Activated CD8-positive, alpha-beta T cell treated with anti-CD3 and anti-CD28 coated beads for 36 hours (primary cell): ENCODE measurements at regions of chr19 and their contacts with region 1.

Region 1: DNA sequence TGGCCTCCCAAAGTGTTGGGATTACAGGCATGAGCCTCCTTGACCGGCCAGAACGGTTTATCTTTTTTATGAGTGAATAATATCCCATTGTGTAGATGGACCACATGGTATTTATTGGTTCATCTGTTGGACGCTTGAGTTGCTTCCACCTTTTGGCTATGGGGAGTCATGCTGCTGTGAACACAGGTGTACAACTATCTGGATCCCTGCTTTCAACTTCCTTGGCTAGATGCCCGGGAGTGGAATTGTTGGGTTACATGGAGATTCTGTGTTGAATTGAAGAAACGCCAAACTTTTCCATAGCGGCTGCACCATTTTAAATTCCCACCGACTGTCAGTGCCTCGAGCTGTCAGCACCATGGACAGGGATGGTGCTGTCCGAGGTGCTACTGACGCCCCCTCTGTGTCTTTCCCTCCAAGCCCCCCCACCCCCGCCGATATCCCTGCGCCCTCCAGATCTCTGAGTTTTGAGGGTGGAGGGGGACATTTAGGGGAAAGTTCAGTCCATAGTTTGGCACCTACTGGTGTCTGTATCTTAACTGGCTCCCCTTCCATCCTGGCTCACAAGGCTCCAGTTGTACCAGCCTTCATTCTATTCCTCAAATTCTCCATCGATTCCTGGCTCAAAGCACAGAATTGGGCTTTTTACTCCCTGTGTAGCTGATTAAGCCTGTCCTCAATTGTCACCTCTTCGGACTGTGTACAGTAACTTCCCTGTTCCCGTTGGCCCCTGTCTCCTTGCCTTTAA is 27.3 kb downstream of the PNPLA6 start:
- DNase-seq: peak; percentile 28
- ATAC-seq: no peak
- H3K4me3 Mint-ChIP-seq: no peak overlapping the region
- H3K27ac Mint-ChIP-seq: no peak overlapping the region
- H3K4me1 Mint-ChIP-seq: no peaks in the 10 kb centered on the region
- H3K27me3 Mint-ChIP-seq: no peaks in the 10 kb centered on the region
- CTCF ChIP-seq: no peak

Region 2: DNA sequence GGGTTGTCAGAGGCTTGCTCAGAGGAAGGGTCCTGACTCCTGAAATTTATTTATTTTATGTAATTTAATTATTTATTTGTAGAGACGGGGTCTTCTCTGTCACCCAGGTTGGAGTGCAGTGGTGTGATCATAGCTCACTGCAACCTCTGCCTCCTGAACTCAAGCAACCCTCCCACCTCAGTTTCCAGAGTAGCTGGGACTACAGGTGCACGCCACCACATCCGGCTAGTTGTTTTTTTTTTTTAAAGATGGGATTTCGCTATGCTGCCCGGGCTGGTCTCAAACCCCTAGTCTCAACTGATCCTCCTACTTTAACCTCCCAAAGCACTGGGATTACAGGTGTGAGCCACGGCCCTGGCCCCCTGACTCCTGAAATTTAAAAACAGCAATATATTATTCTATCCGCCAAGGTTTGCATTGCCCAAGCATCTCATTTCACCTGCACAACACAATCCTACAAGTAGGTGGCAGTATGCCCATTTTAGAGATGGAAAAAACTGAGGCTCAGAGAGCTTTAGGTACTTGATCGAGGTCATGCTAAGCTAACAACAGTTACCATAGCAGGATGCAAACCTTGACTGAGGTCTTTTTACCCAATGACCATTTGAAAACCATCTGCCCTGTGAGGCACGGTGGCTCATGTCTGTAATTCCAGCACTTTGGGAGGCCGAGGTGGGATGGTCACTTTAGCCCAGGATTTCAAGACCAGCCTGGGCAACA is 196.0 kb before region 1 on chr19:
- CTCF ChIA-PET with region 1: interaction called, 12 read pairs
- POLR2A ChIA-PET with region 1: no interaction called
- intact Hi-C with region 1: no loop called
- DNase-seq: peak; percentile 57
- ATAC-seq: peak; percentile 90
- H3K4me3 Mint-ChIP-seq: no peak overlapping the region
- H3K27ac Mint-ChIP-seq: peak overlapping the region; percentile 73
- H3K4me1 Mint-ChIP-seq: peaks cover 22% of the 10 kb centered on the region
- H3K27me3 Mint-ChIP-seq: no peaks in the 10 kb centered on the region
- CTCF ChIP-seq: peak; percentile 79

Region 3: GRCh38 chr19:7552781-7553180 is 10.0 kb before region 1 on chr19:
- CTCF ChIA-PET with region 1: interaction called, 12 read pairs
- POLR2A ChIA-PET with region 1: interaction called, 3 read pairs
- intact Hi-C with region 1: no loop called
- DNase-seq: no peak
- ATAC-seq: no peak
- H3K4me3 Mint-ChIP-seq: no peak overlapping the region
- H3K27ac Mint-ChIP-seq: no peak overlapping the region
- H3K4me1 Mint-ChIP-seq: peaks cover 11% of the 10 kb centered on the region
- H3K27me3 Mint-ChIP-seq: no peaks in the 10 kb centered on the region
- CTCF ChIP-seq: no peak

Region 4: DNA sequence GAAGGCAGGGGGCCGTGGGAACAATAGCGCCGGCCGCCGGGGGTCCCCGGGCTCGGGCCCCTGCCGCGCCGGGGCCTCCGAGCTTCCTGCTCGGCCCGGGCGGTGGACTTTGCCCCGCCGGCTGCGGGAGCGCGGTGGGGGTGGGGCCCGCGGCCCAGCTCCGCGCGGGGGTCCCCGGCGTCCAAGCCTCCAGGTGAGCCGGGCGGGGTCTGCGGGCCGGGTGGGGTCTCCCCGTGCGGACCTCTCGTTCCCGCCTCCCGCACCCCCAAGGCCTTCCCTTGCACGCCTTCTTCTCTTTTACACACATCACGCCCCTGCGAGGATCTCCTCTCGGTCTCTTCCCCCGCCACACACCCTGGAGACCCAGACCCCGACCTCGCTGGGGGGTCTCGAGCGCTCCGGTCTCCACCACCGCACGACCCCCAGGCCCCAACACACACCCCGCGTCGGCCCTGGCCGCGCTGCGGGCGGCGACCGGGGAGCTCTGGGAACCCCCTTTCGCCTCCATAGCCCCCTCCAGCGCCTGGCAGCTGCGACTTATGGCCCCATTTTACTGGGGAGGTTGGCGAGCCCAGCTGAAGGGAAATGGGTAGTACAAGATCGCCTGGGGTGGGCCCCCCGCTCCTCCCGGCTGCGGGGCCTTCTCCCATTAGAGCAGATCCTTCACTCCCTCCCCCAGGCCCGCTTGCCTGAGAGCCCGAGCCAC is 33.6 kb after region 1 on chr19:
- CTCF ChIA-PET with region 1: interaction called, 17 read pairs
- POLR2A ChIA-PET with region 1: interaction called, 3 read pairs
- intact Hi-C with region 1: no loop called
- DNase-seq: peak; percentile 22
- ATAC-seq: no peak
- H3K4me3 Mint-ChIP-seq: peak overlapping the region; percentile 56
- H3K27ac Mint-ChIP-seq: no peak overlapping the region
- H3K4me1 Mint-ChIP-seq: peaks cover 7% of the 10 kb centered on the region
- H3K27me3 Mint-ChIP-seq: peaks cover 30% of the 10 kb centered on the region
- CTCF ChIP-seq: peak; percentile 15

Region 5: GRCh38 chr19:7614859-7615741 is 52.3 kb after region 1 on chr19:
- CTCF ChIA-PET with region 1: no interaction called
- POLR2A ChIA-PET with region 1: no interaction called
- intact Hi-C with region 1: no loop called
- DNase-seq: no peak
- ATAC-seq: no peak
- H3K4me3 Mint-ChIP-seq: no peak overlapping the region
- H3K27ac Mint-ChIP-seq: no peak overlapping the region
- H3K4me1 Mint-ChIP-seq: no peaks in the 10 kb centered on the region
- H3K27me3 Mint-ChIP-seq: no peaks in the 10 kb centered on the region
- CTCF ChIP-seq: no peak

Region 6: DNA sequence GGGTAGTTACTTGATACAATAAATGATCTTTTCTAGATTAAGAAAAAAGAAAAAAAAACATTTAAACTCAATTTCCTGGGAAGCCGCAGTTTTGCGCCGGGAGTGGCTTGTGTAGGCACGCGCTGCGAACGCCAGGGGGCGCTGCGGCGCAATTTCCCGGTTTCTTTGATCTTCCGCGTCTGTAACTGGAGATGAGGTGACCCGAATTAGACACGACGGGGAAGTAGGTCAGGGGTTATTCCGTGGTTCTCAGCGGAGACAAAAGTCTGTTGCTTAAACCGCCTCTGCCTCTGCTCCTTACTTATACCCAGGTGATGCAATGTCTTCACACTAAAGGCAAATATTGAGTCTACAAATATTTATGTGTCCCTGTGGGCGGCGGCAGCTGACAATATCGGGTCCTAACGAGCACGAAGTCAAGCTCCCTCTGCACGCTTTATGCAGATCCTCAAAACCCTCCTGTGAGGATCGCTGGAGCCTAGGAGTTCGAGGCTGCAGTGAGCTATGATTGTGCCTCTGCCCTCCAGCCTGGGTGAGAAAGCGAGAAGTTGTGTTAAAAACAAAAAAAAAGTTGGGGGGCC is 89.3 kb after region 1 on chr19:
- CTCF ChIA-PET with region 1: interaction called, 14 read pairs
- POLR2A ChIA-PET with region 1: no interaction called
- intact Hi-C with region 1: no loop called
- DNase-seq: peak; percentile 91
- ATAC-seq: peak; percentile 86
- H3K4me3 Mint-ChIP-seq: peak overlapping the region; percentile 59
- H3K27ac Mint-ChIP-seq: peak overlapping the region; percentile 53
- H3K4me1 Mint-ChIP-seq: peaks cover 24% of the 10 kb centered on the region
- H3K27me3 Mint-ChIP-seq: no peaks in the 10 kb centered on the region
- CTCF ChIP-seq: peak; percentile 99

Region 7: DNA sequence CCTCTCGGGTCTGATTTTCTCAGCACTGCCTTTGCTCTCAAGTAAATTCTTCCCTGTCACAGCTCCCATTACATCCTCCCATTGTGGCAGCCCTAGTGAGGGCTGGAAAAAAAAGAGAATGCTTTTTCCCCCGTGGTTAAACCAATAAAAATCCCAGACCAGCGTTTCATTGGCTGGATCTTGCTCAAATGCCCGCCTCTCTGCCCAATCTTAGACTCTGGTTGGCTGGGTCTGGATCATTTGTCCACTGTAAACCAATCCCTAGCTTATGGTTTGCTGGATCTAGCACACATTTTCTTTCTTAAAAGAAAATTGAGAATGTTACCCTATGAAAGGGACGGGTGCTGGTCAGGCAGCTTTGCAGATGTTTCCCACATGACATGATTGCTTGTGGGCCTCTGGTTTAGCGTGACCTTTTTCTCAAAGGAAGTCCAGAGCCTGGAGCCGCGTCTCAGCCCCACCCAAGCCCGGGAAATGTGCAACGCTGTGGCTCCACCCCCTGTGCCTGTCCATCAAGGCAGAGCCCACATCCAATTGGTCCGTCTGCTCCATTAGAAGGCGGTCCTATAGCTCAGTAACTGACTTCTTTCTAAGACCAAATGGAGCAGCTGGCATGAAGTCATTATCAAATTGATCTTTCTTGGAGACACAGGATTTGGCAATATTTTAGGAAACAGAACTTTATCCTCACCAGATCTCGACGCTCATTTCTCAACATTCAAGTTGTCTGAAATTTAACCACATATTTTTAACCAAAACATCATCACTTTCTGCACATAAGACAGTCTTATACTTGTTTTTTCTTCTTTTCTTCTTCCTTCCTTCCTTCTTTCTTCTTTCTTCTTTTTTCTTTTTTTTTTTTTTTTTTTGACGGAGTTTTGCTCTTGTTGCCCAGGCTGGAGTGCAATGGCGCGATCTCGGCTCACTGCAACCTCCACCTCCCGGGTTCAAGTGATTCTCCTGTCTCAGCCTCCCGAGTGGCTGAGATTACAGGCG is 111.5 kb after region 1 on chr19:
- CTCF ChIA-PET with region 1: interaction called, 11 read pairs
- POLR2A ChIA-PET with region 1: interaction called, 3 read pairs
- intact Hi-C with region 1: no loop called
- DNase-seq: peak; percentile 57
- ATAC-seq: peak; percentile 45
- H3K4me3 Mint-ChIP-seq: no peak overlapping the region
- H3K27ac Mint-ChIP-seq: no peak overlapping the region
- H3K4me1 Mint-ChIP-seq: peaks cover 43% of the 10 kb centered on the region
- H3K27me3 Mint-ChIP-seq: peaks cover 53% of the 10 kb centered on the region
- CTCF ChIP-seq: no peak

Region 8: GRCh38 chr19:7725791-7726190 is 163.0 kb after region 1 on chr19:
- CTCF ChIA-PET with region 1: no interaction called
- POLR2A ChIA-PET with region 1: no interaction called
- intact Hi-C with region 1: no loop called
- DNase-seq: no peak
- ATAC-seq: no peak
- H3K4me3 Mint-ChIP-seq: no peak overlapping the region
- H3K27ac Mint-ChIP-seq: no peak overlapping the region
- H3K4me1 Mint-ChIP-seq: peaks cover 8% of the 10 kb centered on the region
- H3K27me3 Mint-ChIP-seq: peaks cover 33% of the 10 kb centered on the region
- CTCF ChIP-seq: no peak

Region 9: DNA sequence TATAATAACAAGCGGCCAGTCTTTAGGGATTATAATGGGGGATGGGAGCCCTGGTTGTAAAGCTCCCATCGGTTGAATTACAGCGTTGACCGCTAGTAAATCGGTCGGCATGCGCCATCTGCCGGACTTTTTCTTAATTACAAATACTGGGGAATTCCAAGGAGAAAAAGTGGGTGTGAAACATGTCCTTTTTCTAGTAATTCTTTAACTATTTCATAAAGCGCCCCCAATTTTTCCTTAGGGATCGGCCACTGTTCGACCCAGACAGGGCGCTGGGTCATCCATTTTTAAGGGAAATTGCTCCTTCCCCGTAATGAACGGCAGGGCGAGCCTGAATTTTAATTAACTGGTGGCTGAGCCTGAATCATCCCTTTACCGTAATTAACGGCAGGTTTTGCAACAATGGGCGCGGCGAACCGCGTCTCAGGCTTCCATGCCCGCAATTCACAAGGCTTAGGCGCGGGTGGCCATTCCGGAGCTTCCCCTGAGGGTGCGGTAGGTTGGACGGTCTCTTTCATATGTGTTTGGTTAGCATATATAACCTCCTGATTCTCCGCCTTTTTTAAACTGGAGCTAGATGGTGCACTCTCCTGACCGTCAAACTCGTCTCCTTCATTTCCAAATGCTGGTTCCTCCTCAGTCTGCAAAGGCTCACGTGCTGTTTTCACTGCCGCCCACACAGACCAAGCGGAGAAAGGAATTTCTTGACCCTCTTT is 237.0 kb after region 1 on chr19:
- CTCF ChIA-PET with region 1: interaction called, 35 read pairs
- POLR2A ChIA-PET with region 1: no interaction called
- intact Hi-C with region 1: loop called (anchors 5 kb)
- DNase-seq: peak; percentile 67
- ATAC-seq: peak; percentile 68
- H3K4me3 Mint-ChIP-seq: peak overlapping the region; percentile 27
- H3K27ac Mint-ChIP-seq: no peak overlapping the region
- H3K4me1 Mint-ChIP-seq: peaks cover 7% of the 10 kb centered on the region
- H3K27me3 Mint-ChIP-seq: peaks cover 42% of the 10 kb centered on the region
- CTCF ChIP-seq: peak; percentile 82